Activated T-helper 1 cell treated with anti-CD3 and anti-CD28 coated beads, Interleukin-12 subunit alpha, Interleukin-12 subunit beta, Interleukin-2, Interleukin-4 antibody, amounts not matched to agents 30 ng/mL and 10 ng/mL and 1 ng/mL, durations not matched to agents 14 hours and 24 hours and 36 hours (primary cell): ENCODE measurements at regions of chr10 and their contacts with region 1.

Region 1: GRCh38 chr10:8138471-8138870 is 84.0 kb downstream of the GATA3 start:
- DNase-seq: no peak
- H3K4me3 Mint-ChIP-seq: peak overlapping the region; percentile 15
- H3K27ac Mint-ChIP-seq: peak overlapping the region; percentile 56
- H3K4me1 Mint-ChIP-seq: peaks cover 57% of the 10 kb centered on the region
- H3K27me3 Mint-ChIP-seq: no peaks in the 10 kb centered on the region

Region 2: DNA sequence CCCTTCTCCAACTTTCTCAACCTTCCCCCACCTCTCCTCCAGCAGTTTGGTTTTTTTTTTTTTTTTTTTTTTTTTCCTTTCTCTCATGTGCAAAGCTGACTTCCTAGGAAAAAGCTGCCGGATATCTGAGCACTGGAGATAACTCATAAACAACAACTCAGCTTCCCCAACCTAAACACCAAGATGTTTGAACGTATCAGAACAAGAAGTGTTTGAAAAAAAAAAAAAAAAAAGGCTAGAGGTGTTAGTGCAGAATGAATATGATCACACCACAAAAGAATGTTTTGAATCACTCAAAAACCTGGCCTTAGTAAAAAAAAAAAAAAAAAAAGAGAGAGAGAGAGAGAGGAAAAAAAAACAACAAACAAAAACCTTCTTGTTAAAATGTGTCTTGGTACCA is 72.8 kb before region 1 on chr10:
- intact Hi-C with region 1: loop called (anchors 1 kb)
- DNase-seq: no peak
- H3K4me3 Mint-ChIP-seq: peak overlapping the region; percentile 77
- H3K27ac Mint-ChIP-seq: peak overlapping the region; percentile 88
- H3K4me1 Mint-ChIP-seq: peaks cover 92% of the 10 kb centered on the region
- H3K27me3 Mint-ChIP-seq: peaks cover 2% of the 10 kb centered on the region

Region 3: DNA sequence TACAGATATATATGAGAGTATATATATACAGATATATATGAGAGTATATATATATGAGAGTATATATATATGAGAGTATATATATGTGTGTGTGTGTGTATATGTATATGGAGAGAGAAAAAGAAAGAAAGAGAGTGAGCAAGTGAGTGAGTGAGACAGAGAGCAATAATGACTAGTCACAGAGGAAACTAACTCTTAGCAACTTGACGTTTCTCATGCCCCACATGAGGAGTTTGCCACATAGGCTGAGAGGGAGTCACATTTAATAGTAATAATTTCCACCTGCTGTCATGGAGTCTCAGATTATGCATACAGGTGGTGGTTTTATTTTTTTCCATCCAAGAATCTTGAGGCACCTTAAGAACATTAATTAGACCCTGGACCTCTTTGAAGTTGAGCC is 115.9 kb after region 1 on chr10:
- intact Hi-C with region 1: loop called (anchors 1 kb)
- DNase-seq: no peak
- H3K4me3 Mint-ChIP-seq: peak overlapping the region; percentile 38
- H3K27ac Mint-ChIP-seq: peak overlapping the region; percentile 77
- H3K4me1 Mint-ChIP-seq: peaks cover 48% of the 10 kb centered on the region
- H3K27me3 Mint-ChIP-seq: no peaks in the 10 kb centered on the region

Region 4: GRCh38 chr10:8360365-8360764 is 221.9 kb after region 1 on chr10:
- intact Hi-C with region 1: loop called (anchors 1 kb)
- DNase-seq: no peak
- H3K4me3 Mint-ChIP-seq: peak overlapping the region; percentile 32
- H3K27ac Mint-ChIP-seq: peak overlapping the region; percentile 78
- H3K4me1 Mint-ChIP-seq: peaks cover 56% of the 10 kb centered on the region
- H3K27me3 Mint-ChIP-seq: peaks cover 9% of the 10 kb centered on the region

Region 5: DNA sequence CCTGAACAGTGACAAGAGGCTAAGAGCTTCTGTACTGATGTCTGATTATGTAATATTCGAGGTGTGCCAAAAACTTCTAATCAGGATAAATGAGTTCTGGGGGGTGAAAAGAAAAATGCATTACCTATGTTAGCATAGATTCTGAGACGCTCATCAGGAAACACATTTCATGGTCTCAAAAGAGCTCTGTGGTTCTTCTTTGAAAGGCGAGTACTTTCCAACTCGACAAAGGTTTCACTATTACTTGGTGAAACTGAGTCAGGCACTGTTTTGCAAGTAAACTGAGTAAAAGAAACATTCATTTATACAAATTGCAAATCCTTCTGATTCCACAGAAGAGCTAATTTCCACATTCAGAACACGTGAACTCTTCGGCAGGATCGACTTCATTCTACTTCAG is 439.2 kb after region 1 on chr10:
- intact Hi-C with region 1: loop called (anchors 2 kb)
- DNase-seq: no peak
- H3K4me3 Mint-ChIP-seq: peak overlapping the region; percentile 27
- H3K27ac Mint-ChIP-seq: peak overlapping the region; percentile 64
- H3K4me1 Mint-ChIP-seq: peaks cover 40% of the 10 kb centered on the region
- H3K27me3 Mint-ChIP-seq: peaks cover 3% of the 10 kb centered on the region